ENCODE measurements at regions of chr18 and their contacts with region 1.

Region 1: GRCh38 chr18:57135699-57136098 is 11.2 kb upstream of the BOD1L2 start:
- DNase-seq: no peak
- H3K4me3 ChIP-seq: no peak overlapping the region
- H3K27ac ChIP-seq: no peak overlapping the region
- H3K4me1 ChIP-seq: no peaks in the 10 kb centered on the region
- H3K27me3 ChIP-seq: no peaks in the 10 kb centered on the region
- CTCF ChIP-seq: peak in 2 of 3 experiments; percentile 7 to 45; a peak in 2 of 4 replicates
- EP300 ChIP-seq: no peak
- POLR2A ChIP-seq: no peak
- RAD21 ChIP-seq: peak in 1 of 2 experiments; percentile 22; a peak in 1 of 4 replicates

Region 2: GRCh38 chr18:57121542-57122112 is 14.1 kb before region 1 on chr18:
- CTCF ChIA-PET with region 1: interaction called, 22 read pairs
- POLR2A ChIA-PET with region 1: interaction called, 5 read pairs
- DNase-seq: peak in 1 of 2 experiments; percentile 79
- H3K4me3 ChIP-seq: peak overlapping the region; percentile 34 to 58 (median 45)
- H3K27ac ChIP-seq: no peak overlapping the region
- H3K4me1 ChIP-seq: peaks cover 4 to 14% (median 5%) of the 10 kb centered on the region in 4 experiments; a peak in 4 of 7 replicates
- H3K27me3 ChIP-seq: no peaks in the 10 kb centered on the region; a peak in 2 of 7 replicates
- CTCF ChIP-seq: peak; percentile 20 to 27 (median 27)
- EP300 ChIP-seq: no peak
- POLR2A ChIP-seq: peak in 1 of 2 experiments; percentile 39; a peak in 1 of 3 replicates
- RAD21 ChIP-seq: peak in 1 of 2 experiments; percentile 57; a peak in 3 of 4 replicates

Region 3: GRCh38 chr18:57150828-57151227 is 15.1 kb after region 1 on chr18:
- CTCF ChIA-PET with region 1: interaction called, 21 read pairs
- POLR2A ChIA-PET with region 1: interaction called, 3 read pairs
- DNase-seq: peak; percentile 7 to 70
- H3K4me3 ChIP-seq: no peak overlapping the region
- H3K27ac ChIP-seq: no peak overlapping the region
- H3K4me1 ChIP-seq: peaks cover 2 to 7% (median 4%) of the 10 kb centered on the region in 4 experiments; a peak in 4 of 7 replicates
- H3K27me3 ChIP-seq: no peaks in the 10 kb centered on the region
- CTCF ChIP-seq: no peak
- EP300 ChIP-seq: no peak
- POLR2A ChIP-seq: no peak
- RAD21 ChIP-seq: no peak

Measured in H1 (cell line).